ENCODE measurements at regions of chr3 and their contacts with region 1.

Region 1: GRCh38 chr3:196073188-196073838 is 8.6 kb downstream of the TFRC start:
- DNase-seq: peak; percentile 33 to 81 (median 75)
- ATAC-seq: peak; percentile 100
- H3K4me3 ChIP-seq: no peak overlapping the region
- H3K4me3 Mint-ChIP-seq: peak overlapping the region in 1 of 10 donors; percentile 44
- H3K27ac ChIP-seq: no peak overlapping the region
- H3K27ac Mint-ChIP-seq: peak overlapping the region in 6 of 9 donors; percentile 4 to 82 (median 54)
- H3K4me1 ChIP-seq: peaks cover 7% of the 10 kb centered on the region in 2 donors
- H3K4me1 Mint-ChIP-seq: peaks cover 13 to 53% (median 18%) of the 10 kb centered on the region in 7 donors
- H3K27me3 ChIP-seq: no peaks in the 10 kb centered on the region
- H3K27me3 Mint-ChIP-seq: no peaks in the 10 kb centered on the region

Region 2: GRCh38 chr3:195716865-195717210 is 356.5 kb before region 1 on chr3:
- CTCF ChIA-PET with region 1: no interaction called
- POLR2A ChIA-PET with region 1: no interaction called
- intact Hi-C with region 1: no loop called
- DNase-seq: no peak
- ATAC-seq: no peak
- H3K4me3 ChIP-seq: no peak overlapping the region
- H3K4me3 Mint-ChIP-seq: no peak overlapping the region
- H3K27ac ChIP-seq: no peak overlapping the region
- H3K27ac Mint-ChIP-seq: peak overlapping the region in 1 of 9 donors; percentile 16
- H3K4me1 ChIP-seq: no peaks in the 10 kb centered on the region
- H3K4me1 Mint-ChIP-seq: peaks cover 0 to 4% (median 0%) of the 10 kb centered on the region in 7 donors
- H3K27me3 ChIP-seq: no peaks in the 10 kb centered on the region
- H3K27me3 Mint-ChIP-seq: peaks cover 0 to 5% (median 0%) of the 10 kb centered on the region in 5 donors

Region 3: GRCh38 chr3:196186651-196187573 is 113.6 kb after region 1 on chr3:
- CTCF ChIA-PET with region 1: interaction called, 209 read pairs
- POLR2A ChIA-PET with region 1: interaction called, 3 read pairs
- intact Hi-C with region 1: loop called in 1 of 2 experiments (anchors 1 kb)
- DNase-seq: no peak
- ATAC-seq: peak; percentile 4
- H3K4me3 ChIP-seq: peak overlapping the region; percentile 7
- H3K4me3 Mint-ChIP-seq: peak overlapping the region in 8 of 10 donors; percentile 29 to 70 (median 52)
- H3K27ac ChIP-seq: peak overlapping the region; percentile 21
- H3K27ac Mint-ChIP-seq: peak overlapping the region in 7 of 9 donors; percentile 14 to 82 (median 67)
- H3K4me1 ChIP-seq: peaks cover 4 to 25% of the 10 kb centered on the region in 2 donors
- H3K4me1 Mint-ChIP-seq: peaks cover 11 to 49% (median 16%) of the 10 kb centered on the region in 7 donors
- H3K27me3 ChIP-seq: no peaks in the 10 kb centered on the region
- H3K27me3 Mint-ChIP-seq: no peaks in the 10 kb centered on the region